ENCODE measurements at regions of chr4 and their contacts with region 1.

Region 1: GRCh38 chr4:76179398-76180318 is 31.5 kb upstream of the NUP54 start:
- DNase-seq: peak; percentile 77
- CTCF ChIP-seq: peak; percentile 85

Region 2: GRCh38 chr4:75675004-75675531 is 504.6 kb before region 1 on chr4:
- CTCF ChIA-PET with region 1: no interaction called
- POLR2A ChIA-PET with region 1: no interaction called
- DNase-seq: no peak
- CTCF ChIP-seq: no peak

Region 3: GRCh38 chr4:75800972-75801371 is 378.7 kb before region 1 on chr4:
- CTCF ChIA-PET with region 1: no interaction called
- POLR2A ChIA-PET with region 1: no interaction called
- DNase-seq: no peak
- CTCF ChIP-seq: no peak

Region 4: GRCh38 chr4:76067652-76068286 is 111.9 kb before region 1 on chr4:
- CTCF ChIA-PET with region 1: no interaction called
- POLR2A ChIA-PET with region 1: no interaction called
- DNase-seq: peak; percentile 70
- CTCF ChIP-seq: peak; percentile 86

Region 5: GRCh38 chr4:76160355-76160754 is 19.3 kb before region 1 on chr4:
- CTCF ChIA-PET with region 1: interaction called, 13 read pairs
- POLR2A ChIA-PET with region 1: no interaction called
- DNase-seq: no peak
- CTCF ChIP-seq: no peak

Region 6: GRCh38 chr4:76198411-76199237 is 19.0 kb after region 1 on chr4:
- CTCF ChIA-PET with region 1: interaction called, 40 read pairs
- POLR2A ChIA-PET with region 1: no interaction called
- DNase-seq: peak; percentile 61
- CTCF ChIP-seq: no peak

Region 7: DNA sequence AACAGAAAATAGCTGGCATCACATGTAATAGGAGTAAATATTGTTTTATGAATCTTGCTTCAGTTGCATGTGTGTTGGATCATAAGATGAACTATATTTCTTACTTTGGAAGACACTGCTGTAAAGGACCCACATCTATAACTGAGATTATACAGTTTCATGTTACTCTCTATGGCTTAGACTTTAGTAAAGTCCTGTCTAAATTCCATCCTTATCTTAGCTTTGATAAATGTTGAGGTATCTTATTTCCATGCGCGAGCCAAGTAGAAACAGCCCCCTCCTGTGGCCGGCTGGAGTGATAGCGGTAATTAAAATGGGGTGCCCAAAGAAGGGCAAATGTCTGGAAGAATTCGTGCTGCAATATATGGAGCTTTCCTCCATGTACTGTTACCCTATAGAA is 198.3 kb after region 1 on chr4:
- CTCF ChIA-PET with region 1: interaction called, 163 read pairs
- POLR2A ChIA-PET with region 1: no interaction called
- DNase-seq: peak; percentile 23
- CTCF ChIP-seq: peak; percentile 58

Region 8: DNA sequence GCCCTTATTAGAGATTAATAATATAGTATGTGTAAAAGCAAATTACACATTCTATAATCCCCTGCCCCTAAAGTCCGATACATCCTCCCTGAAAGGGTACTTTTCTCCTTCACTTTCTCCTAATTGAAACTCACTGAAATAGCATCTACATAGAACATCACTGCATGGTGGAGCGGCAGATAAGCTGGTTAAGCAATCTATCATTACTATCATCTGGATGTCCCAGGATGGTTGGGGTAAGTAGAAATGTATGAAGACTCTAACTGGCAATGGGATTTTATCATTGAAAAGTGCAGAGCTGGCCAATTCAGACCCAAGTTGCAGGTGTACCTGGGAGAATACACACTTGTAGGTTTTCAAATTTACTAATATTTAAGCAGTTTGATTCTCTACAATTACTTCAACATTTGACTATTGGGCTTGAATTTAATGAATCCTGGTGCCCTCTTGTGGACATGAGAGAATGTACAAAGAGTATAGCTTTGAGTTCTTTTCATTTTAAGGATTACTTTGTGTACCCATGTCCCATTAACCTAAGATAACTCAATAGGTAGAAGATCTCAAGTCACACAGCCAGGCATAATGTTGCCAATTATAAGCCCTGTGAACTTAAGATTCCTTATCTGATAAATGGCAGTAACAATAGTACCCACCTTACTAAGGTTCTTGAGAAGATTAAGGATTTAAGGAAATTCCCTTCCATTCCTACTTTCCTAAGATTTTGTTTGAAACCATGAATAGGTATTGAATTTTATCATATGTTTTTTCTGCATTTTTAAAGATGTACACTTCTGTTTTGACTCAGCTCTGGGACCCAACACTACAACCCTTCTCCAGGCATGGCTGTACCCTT is 325.2 kb after region 1 on chr4:
- CTCF ChIA-PET with region 1: interaction called, 48 read pairs
- POLR2A ChIA-PET with region 1: no interaction called
- DNase-seq: peak; percentile 50
- CTCF ChIP-seq: peak; percentile 59

Measured in GM10248 (cell line).